ENCODE measurements at regions of chr1 and their contacts with region 1.

Region 1: GRCh38 chr1:113140588-113141446 is 67.8 kb downstream of the LRIG2 start:
- DNase-seq: peak; percentile 69
- H3K4me3 Mint-ChIP-seq: no peak overlapping the region
- H3K27ac Mint-ChIP-seq: no peak overlapping the region
- H3K4me1 Mint-ChIP-seq: peaks cover 20% of the 10 kb centered on the region
- H3K27me3 Mint-ChIP-seq: no peaks in the 10 kb centered on the region
- CTCF ChIP-seq: peak; percentile 84

Region 2: DNA sequence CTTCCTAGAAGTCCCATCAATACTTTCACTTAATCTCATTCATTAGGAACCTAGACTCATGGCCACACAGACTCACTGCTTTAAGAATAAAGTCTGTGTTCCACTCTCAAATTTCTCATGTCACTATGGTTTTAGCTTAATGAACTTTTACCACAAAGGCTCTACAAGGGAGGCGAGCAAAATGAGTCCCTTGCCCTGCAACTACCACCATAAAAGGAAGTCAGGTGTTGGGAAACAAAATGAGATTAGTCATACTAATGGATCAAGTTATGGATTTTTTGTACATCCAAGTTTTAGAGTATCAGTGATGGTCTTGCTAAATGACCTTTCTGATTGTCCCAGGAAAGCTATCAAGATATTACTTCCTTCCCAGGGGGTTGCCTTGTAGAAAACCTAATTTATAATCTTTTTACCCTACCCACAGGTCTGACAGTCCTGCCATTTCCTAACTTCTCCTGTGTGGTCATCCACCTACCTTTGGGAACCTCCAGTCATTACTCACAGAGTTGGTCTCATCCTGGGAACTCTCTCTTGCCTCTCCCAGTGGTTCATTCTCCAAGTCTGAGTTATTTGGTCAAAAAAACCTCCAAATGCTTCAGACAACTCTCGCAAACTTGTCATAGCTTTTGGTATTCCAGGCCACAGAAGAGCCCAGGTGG is 133.0 kb before region 1 on chr1:
- CTCF ChIA-PET with region 1: no interaction called
- POLR2A ChIA-PET with region 1: no interaction called
- intact Hi-C with region 1: no loop called
- DNase-seq: peak; percentile 34
- H3K4me3 Mint-ChIP-seq: no peak overlapping the region
- H3K27ac Mint-ChIP-seq: peak overlapping the region; percentile 71
- H3K4me1 Mint-ChIP-seq: peaks cover 6% of the 10 kb centered on the region
- H3K27me3 Mint-ChIP-seq: no peaks in the 10 kb centered on the region
- CTCF ChIP-seq: no peak

Region 3: DNA sequence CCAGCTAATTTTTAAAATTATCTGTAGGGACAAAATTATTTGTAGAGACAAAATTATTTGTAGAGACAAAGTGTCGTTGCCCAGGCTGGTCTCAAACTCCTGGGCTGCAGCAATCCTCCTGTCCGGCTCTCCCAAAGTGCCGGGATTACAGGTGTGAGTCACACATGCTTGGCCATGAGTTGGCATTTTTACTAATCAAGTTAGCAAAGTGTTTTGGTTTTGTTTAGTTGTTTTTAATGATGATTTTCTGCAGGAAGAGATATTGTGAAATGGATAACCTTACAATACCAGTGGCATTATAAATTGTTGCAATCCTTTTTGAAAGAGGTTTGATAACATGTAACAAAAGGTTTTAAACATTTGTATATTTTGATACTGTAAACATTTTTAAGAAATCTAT is 184.2 kb after region 1 on chr1:
- CTCF ChIA-PET with region 1: no interaction called
- POLR2A ChIA-PET with region 1: no interaction called
- intact Hi-C with region 1: loop called (anchors 10 kb)
- DNase-seq: peak; percentile 86
- H3K4me3 Mint-ChIP-seq: no peak overlapping the region
- H3K27ac Mint-ChIP-seq: peak overlapping the region; percentile 82
- H3K4me1 Mint-ChIP-seq: peaks cover 27% of the 10 kb centered on the region
- H3K27me3 Mint-ChIP-seq: no peaks in the 10 kb centered on the region
- CTCF ChIP-seq: no peak

Region 4: GRCh38 chr1:113452921-113453770 is 312.3 kb after region 1 on chr1:
- CTCF ChIA-PET with region 1: interaction called, 36 read pairs
- POLR2A ChIA-PET with region 1: interaction called, 6 read pairs
- intact Hi-C with region 1: loop called (anchors 1 kb)
- DNase-seq: peak; percentile 65
- H3K4me3 Mint-ChIP-seq: no peak overlapping the region
- H3K27ac Mint-ChIP-seq: peak overlapping the region; percentile 65
- H3K4me1 Mint-ChIP-seq: peaks cover 45% of the 10 kb centered on the region
- H3K27me3 Mint-ChIP-seq: no peaks in the 10 kb centered on the region
- CTCF ChIP-seq: peak; percentile 44

Region 5: GRCh38 chr1:113677250-113678158 is 536.7 kb after region 1 on chr1:
- CTCF ChIA-PET with region 1: interaction called, 153 read pairs
- POLR2A ChIA-PET with region 1: interaction called, 3 read pairs
- intact Hi-C with region 1: loop called (anchors 1 kb)
- DNase-seq: peak; percentile 52
- H3K4me3 Mint-ChIP-seq: no peak overlapping the region
- H3K27ac Mint-ChIP-seq: peak overlapping the region; percentile 61
- H3K4me1 Mint-ChIP-seq: peaks cover 16% of the 10 kb centered on the region
- H3K27me3 Mint-ChIP-seq: no peaks in the 10 kb centered on the region
- CTCF ChIP-seq: peak; percentile 50

Region 6: GRCh38 chr1:113684153-113684541 is 543.3 kb after region 1 on chr1:
- CTCF ChIA-PET with region 1: interaction called, 153 read pairs
- POLR2A ChIA-PET with region 1: interaction called, 3 read pairs
- intact Hi-C with region 1: no loop called
- DNase-seq: no peak
- H3K4me3 Mint-ChIP-seq: no peak overlapping the region
- H3K27ac Mint-ChIP-seq: no peak overlapping the region
- H3K4me1 Mint-ChIP-seq: no peaks in the 10 kb centered on the region
- H3K27me3 Mint-ChIP-seq: no peaks in the 10 kb centered on the region
- CTCF ChIP-seq: no peak

Region 7: GRCh38 chr1:113759333-113760101 is 618.7 kb after region 1 on chr1 and contains the start of gene PHTF1:
- CTCF ChIA-PET with region 1: no interaction called
- POLR2A ChIA-PET with region 1: no interaction called
- intact Hi-C with region 1: loop called (anchors 1 kb)
- DNase-seq: peak; percentile 69
- H3K4me3 Mint-ChIP-seq: peak within 1 kb of the TSS; percentile 73
- H3K27ac Mint-ChIP-seq: peak within 1 kb of the TSS; percentile 73
- H3K4me1 Mint-ChIP-seq: peaks cover 13% of the 10 kb centered on the region
- H3K27me3 Mint-ChIP-seq: no peaks in the 10 kb centered on the region
- CTCF ChIP-seq: no peak
- total RNA-seq, gene PHTF1: 8.4 and 13.0 TPM in 2 replicates

Measured in MCF 10A (cell line).